Mammary epithelial cell (primary cell): ENCODE measurements at regions of chr2 and their contacts with region 1.

Region 1: DNA sequence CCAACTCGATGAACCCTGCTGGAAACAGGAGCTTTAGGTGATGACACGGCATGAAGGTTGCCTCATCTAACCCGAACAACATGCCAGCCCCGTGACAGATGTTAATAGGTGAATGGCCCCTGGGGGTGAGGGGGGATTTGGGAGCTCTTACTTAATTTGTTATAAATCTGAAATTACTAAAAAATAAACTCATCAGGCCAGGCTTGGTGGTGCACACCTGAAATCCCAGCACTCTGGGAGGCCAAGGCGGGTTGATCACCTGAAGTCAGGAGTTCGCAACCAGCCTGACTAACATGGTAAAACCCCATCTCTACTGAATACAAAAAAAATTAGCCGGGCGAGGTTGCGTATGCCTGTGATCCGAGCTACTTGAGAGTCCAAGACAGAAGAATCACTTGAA is 6.1 kb downstream of the STK25 start:
- DNase-seq: no peak
- H3K4me3 ChIP-seq: no peak overlapping the region
- H3K27ac ChIP-seq: no peak overlapping the region
- H3K4me1 ChIP-seq: peaks cover 7% of the 10 kb centered on the region
- H3K27me3 ChIP-seq: no peaks in the 10 kb centered on the region
- CTCF ChIP-seq: no peak

Region 2: DNA sequence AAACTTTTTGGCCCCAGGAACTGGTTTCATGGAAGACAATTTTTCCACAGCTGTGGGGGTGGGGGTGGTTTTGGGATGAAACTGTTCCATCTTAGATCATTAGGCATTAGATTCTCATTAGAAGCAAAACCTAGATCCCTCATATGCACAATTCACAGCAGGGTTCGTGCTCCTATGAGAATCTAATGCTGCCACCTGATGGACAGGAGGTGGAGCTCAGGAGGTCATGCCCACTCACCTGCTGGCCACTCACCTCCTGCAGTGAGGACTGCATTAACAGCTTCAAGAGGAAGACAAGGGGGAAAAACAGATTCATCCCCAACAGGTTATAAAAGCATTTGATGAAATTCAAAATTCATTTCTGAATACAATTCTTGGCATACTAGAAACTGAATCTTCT is 96.2 kb after region 1 on chr2:
- CTCF ChIA-PET with region 1: interaction called, 11 read pairs
- dilution Hi-C with region 1: no loop called
- in situ Hi-C with region 1: no loop called
- intact Hi-C with region 1: loop called (anchors 5 kb)
- DNase-seq: peak; percentile 11
- H3K4me3 ChIP-seq: no peak overlapping the region
- H3K27ac ChIP-seq: no peak overlapping the region
- H3K4me1 ChIP-seq: no peaks in the 10 kb centered on the region
- H3K27me3 ChIP-seq: no peaks in the 10 kb centered on the region
- CTCF ChIP-seq: peak; percentile 22 to 51